Endothelial cell of umbilical vein (primary cell): ENCODE measurements at regions of chr15 and their contacts with region 1.

Region 1: GRCh38 chr15:77633134-77633912 is 611 bp upstream of the LINGO1 start:
- DNase-seq: peak; percentile 76
- H3K4me3 ChIP-seq: peak overlapping the region in 2 of 3 experiments; percentile 9 to 37
- H3K27ac ChIP-seq: no peak overlapping the region
- H3K4me1 ChIP-seq: peaks cover 3% of the 10 kb centered on the region
- H3K27me3 ChIP-seq: peaks cover 39 to 45% of the 10 kb centered on the region in 2 experiments
- CTCF ChIP-seq: peak; percentile 100
- POLR2A ChIP-seq: no peak

Region 2: DNA sequence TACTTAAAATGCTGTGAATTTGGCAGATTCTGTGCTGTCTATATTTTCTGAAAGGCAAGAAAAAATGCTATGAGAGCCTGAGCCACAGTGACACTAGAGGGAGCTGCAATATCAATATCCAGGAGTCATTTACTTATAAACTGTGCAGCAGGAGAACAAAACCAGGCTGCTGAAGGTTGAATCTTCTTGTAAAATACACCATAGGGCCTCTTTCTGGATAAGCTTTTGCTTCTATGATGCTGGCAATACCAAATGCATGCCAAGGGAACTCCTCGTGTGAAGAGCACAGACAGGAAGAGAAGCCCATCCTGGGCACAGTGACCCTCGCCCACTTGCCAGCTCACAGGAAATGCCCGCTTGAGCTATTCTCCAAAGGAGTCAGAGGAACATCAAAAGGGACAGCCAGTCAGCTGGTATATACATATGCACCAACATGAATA is 514.4 kb before region 1 on chr15:
- CTCF ChIA-PET with region 1: interaction called, 17 read pairs
- POLR2A ChIA-PET with region 1: no interaction called
- dilution Hi-C with region 1: no loop called
- intact Hi-C with region 1: no loop called
- DNase-seq: peak; percentile 80
- H3K4me3 ChIP-seq: no peak overlapping the region
- H3K27ac ChIP-seq: peak overlapping the region; percentile 8
- H3K4me1 ChIP-seq: peaks cover 14% of the 10 kb centered on the region
- H3K27me3 ChIP-seq: no peaks in the 10 kb centered on the region
- CTCF ChIP-seq: peak; percentile 57 to 63
- POLR2A ChIP-seq: no peak

Region 3: DNA sequence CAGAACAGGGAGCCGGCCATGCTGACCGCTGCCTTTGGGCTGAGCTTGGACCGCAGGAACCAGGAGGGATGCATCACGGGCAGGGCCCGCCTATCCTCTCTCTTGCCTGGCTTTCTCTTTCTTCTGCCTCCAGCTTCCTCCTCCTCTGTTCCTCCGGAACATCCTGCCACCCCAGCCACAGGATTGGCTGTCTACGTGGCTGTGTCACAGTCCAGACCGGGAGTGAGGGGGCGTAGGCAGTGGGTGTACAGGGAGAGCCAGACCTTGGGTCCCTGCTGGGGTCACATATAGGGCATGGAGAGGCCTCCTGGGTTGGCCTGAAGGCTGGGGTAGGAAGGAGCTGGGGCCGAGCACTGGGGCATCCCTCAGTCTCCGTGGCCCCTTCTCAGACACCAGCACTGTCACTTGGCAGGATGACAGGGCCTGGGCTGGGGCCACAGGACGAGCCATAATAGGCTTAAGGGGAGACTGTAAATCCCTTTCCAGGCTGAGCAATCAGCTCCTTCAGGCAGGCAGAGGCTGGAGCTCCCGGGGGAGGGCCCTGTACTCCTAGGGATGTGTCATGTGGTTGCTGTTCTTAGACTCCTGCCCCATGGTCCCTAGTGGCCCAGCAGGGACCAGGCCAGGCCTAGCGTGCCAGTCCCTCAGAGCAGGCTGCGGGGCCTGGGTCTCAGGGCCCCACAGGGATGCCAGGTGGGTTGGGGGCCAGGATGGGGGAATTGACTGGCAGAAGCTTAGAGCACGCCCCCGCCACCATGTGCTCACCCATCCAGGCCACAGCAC is 26.0 kb before region 1 on chr15:
- CTCF ChIA-PET with region 1: interaction called, 16 read pairs
- POLR2A ChIA-PET with region 1: no interaction called
- dilution Hi-C with region 1: no loop called
- intact Hi-C with region 1: no loop called
- DNase-seq: no peak
- H3K4me3 ChIP-seq: no peak overlapping the region
- H3K27ac ChIP-seq: no peak overlapping the region
- H3K4me1 ChIP-seq: peaks cover 3% of the 10 kb centered on the region
- H3K27me3 ChIP-seq: no peaks in the 10 kb centered on the region
- CTCF ChIP-seq: no peak
- POLR2A ChIP-seq: no peak

Region 4: GRCh38 chr15:77650265-77650664 is 16.9 kb after region 1 on chr15:
- CTCF ChIA-PET with region 1: interaction called, 36 read pairs
- POLR2A ChIA-PET with region 1: no interaction called
- dilution Hi-C with region 1: no loop called
- intact Hi-C with region 1: no loop called
- DNase-seq: peak; percentile 13
- H3K4me3 ChIP-seq: no peak overlapping the region
- H3K27ac ChIP-seq: no peak overlapping the region
- H3K4me1 ChIP-seq: no peaks in the 10 kb centered on the region
- H3K27me3 ChIP-seq: peaks cover 3% of the 10 kb centered on the region in 2 experiments
- CTCF ChIP-seq: peak; percentile 26 to 46
- POLR2A ChIP-seq: no peak

Region 5: GRCh38 chr15:77784395-77785292 is 151.3 kb after region 1 on chr15:
- CTCF ChIA-PET with region 1: interaction called, 9 read pairs
- POLR2A ChIA-PET with region 1: no interaction called
- dilution Hi-C with region 1: no loop called
- intact Hi-C with region 1: loop called (anchors 10 kb)
- DNase-seq: peak; percentile 14
- H3K4me3 ChIP-seq: no peak overlapping the region
- H3K27ac ChIP-seq: no peak overlapping the region
- H3K4me1 ChIP-seq: no peaks in the 10 kb centered on the region
- H3K27me3 ChIP-seq: no peaks in the 10 kb centered on the region
- CTCF ChIP-seq: peak; percentile 44 to 59
- POLR2A ChIP-seq: no peak

Region 6: DNA sequence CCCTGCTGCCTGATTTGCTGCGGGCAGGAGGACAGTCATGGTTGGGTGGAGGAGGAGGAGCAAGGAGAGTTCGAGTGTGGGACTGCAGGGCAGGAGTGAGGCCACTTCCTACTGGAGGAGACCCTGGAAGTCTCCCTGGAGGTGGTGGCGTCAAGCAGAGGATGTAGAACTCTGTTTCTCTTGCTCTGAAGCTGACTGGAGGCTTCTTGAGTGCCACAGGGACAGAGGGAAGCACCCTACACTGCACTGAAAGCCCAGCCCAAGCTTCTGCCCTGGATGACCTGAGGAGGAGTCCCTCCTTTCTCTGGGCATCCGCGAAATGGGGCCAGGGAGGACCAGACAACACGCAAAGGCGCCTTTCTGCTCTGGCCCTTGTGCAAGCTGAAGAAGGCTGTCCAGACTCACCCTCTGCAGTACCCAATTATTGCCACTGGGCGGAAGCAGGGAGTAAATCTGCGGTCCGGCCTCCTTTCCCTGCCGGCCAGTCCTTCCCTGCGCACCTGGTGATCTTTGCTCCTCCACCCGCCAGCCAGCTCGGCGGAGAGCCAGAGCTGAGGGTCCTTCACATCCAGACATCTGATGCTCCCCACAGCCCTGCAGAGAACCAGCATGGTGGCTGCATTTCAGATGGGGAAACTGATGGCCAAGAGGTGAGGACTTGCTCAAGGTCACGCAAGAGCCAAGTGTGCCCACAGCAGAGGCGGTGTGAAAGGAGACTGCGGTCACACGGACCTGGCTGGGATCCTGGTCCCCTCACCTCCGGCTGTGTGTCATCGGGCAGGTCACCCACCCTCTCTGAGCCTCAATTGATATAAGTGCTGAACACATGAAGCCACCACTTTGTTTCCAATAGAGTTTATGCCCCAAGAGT is 237.1 kb after region 1 on chr15:
- CTCF ChIA-PET with region 1: interaction called, 10 read pairs
- POLR2A ChIA-PET with region 1: no interaction called
- dilution Hi-C with region 1: no loop called
- intact Hi-C with region 1: no loop called
- DNase-seq: peak; percentile 63
- H3K4me3 ChIP-seq: no peak overlapping the region
- H3K27ac ChIP-seq: no peak overlapping the region
- H3K4me1 ChIP-seq: peaks cover 4% of the 10 kb centered on the region
- H3K27me3 ChIP-seq: no peaks in the 10 kb centered on the region
- CTCF ChIP-seq: peak; percentile 39 to 84
- POLR2A ChIP-seq: no peak